ENCODE measurements at regions of chr12 and their contacts with region 1.

Region 1: DNA sequence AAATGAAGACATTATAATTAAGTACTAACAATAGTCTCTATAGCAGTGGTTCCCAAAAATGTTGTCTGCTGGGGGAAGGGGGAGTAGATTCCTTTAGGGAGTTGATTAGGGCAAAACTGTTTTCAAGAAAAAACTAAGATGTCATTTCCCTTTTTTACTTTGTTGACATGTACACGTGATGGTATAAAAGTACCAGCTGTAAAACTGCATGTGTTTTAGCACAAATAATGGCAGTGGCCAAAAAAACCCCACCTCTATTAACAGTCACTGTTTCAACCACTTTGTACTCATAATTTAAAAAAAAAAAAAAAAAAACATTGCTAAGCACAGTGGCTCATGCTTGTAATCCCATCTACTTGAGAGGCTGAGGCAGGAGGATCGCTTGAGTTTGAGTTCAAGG is 61.7 kb downstream of the PPP1R12A start:
- DNase-seq: no peak
- ATAC-seq: no peak
- H3K4me3 ChIP-seq: no peak overlapping the region
- H3K27ac ChIP-seq: no peak overlapping the region
- H3K4me1 ChIP-seq: no peaks in the 10 kb centered on the region
- H3K27me3 ChIP-seq: no peaks in the 10 kb centered on the region
- CTCF ChIP-seq: no peak

Region 2: GRCh38 chr12:79482323-79482722 is 390.9 kb before region 1 on chr12:
- intact Hi-C with region 1: no loop called
- DNase-seq: no peak
- ATAC-seq: no peak
- H3K4me3 ChIP-seq: no peak overlapping the region
- H3K27ac ChIP-seq: no peak overlapping the region
- H3K4me1 ChIP-seq: no peaks in the 10 kb centered on the region
- H3K27me3 ChIP-seq: no peaks in the 10 kb centered on the region
- CTCF ChIP-seq: no peak

Region 3: GRCh38 chr12:79897617-79898016 is 24.4 kb after region 1 on chr12:
- intact Hi-C with region 1: loop called in 1 of 2 experiments (anchors 1 kb)
- DNase-seq: no peak
- ATAC-seq: no peak
- H3K4me3 ChIP-seq: no peak overlapping the region
- H3K27ac ChIP-seq: no peak overlapping the region
- H3K4me1 ChIP-seq: no peaks in the 10 kb centered on the region
- H3K27me3 ChIP-seq: no peaks in the 10 kb centered on the region
- CTCF ChIP-seq: no peak

Region 4: DNA sequence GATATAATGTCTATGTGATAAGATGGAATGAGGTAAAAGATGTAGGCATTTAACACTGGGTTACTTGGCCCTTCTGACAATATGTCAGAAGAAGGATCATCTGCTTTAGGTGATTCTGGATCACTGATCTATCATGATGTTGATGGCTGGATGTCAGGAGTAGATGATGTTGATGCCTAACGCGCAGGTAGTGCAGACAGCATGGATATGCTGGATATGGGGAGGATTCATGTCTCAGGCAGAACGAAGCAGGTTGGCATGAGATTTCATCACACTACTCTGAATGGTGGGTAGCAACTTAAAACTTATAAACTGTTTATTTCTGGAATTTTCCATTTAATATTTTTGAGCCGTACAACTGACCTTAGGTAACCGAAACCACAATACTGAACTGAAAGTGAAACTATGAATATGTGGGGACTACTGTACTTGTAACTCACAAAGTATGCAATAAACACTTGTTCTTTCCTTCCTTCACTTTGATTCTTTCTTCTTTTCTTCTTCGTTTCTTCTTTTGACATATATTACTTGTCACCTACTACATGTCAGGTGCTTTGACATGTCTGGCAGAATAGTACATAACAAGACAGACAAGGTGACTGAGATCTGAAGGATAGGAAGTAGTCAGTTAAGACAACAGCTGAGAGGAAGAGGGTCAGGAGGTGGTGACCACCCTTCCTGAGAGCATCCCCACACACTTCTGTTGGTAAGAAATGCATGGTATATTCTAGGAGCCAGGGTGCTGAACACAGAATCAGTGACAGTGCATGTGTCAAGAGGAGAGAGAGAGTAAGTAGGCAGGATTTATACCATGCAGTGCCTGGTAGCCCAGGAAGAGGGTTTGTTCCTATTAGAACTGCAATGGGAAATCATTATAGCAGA is 1647.1 kb after region 1 on chr12:
- intact Hi-C with region 1: loop called in 1 of 2 experiments (anchors 10 kb)
- DNase-seq: no peak
- ATAC-seq: no peak
- H3K4me3 ChIP-seq: peak overlapping the region; percentile 25
- H3K27ac ChIP-seq: no peak overlapping the region
- H3K4me1 ChIP-seq: no peaks in the 10 kb centered on the region
- H3K27me3 ChIP-seq: no peaks in the 10 kb centered on the region
- CTCF ChIP-seq: no peak